Dorsolateral prefrontal cortex (tissue), 120 donors: ENCODE measurements at regions of chr6 and their contacts with region 1.

Region 1: DNA sequence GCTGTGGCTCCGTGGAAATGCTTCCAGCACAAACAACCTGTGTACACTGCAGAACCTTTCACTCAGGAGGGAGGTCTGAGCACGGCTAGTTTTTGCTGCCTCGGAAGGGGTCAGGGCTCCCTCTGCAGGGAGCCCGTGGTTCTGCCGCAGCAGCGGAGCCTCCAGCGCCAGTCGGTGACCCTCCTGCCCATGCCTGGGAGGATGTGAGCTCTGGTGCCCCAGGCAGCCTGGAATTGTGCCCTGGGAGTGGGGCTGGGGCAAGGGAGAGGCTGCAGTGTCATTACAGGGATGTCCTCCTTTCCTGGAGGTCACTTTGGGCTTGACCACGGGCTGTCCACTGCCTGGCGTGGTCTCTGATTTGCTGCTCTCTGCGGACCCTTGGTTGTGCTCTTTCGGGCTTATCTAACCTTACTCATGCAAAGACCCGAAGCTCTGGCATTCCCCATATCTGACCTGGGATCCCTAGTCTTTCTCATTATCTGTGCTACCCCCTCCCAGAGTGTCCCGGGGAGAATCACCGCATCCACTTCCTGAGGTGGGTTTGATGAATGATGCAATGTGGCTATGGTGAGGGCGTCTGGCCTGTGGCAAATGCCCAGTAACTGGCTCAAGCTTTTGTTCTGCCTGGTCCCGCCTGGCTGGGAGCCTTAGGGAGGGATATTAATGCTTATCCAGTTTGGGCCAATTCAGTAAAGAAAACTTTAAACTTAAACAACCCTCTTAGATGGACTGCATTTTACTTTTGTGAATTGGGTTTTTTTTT is 59.6 kb upstream of the TAGAP start:
- DNase-seq: peak in 6 of 10 donors; percentile 47 to 76 (median 60)
- H3K4me3 ChIP-seq: no peak overlapping the region
- H3K27ac ChIP-seq: peak overlapping the region in 30 of 59 donors; percentile 1 to 88 (median 72)
- H3K27me3 ChIP-seq: no peaks in the 10 kb centered on the region
- CTCF ChIP-seq: peak; percentile 27 to 91 (median 82)

Region 2: DNA sequence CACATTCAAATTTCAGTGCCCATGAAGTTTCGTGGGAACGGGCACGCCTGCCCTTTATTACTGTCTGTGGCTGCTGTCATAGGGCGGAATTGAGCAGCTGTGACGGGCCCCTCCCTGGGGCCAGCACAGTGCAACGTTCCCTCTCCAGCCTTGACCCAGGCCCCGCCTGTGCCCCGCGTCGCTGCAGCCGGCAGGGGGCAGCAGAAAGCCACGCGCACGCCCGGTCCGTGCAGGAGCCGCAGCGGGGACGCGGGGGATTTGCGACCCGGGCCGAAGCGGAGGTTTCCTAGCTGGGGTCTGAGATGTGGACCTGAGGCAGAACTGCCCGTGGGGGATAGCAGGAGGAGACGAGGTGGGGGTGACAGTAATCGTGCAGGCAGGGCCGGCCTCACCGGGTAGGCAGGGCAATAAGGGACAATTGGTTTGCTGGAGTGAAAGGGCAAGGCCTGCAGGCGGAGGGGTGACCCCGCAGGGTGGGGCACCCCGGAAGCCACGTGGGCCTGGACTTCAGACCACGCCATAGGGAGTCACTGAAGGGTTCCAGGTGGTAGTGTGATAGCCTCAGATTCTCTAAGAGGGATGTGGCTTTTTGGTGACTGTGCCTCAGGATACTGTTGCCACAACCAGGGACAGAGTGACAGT is 400.0 kb before region 1 on chr6:
- intact Hi-C with region 1: loop called in 1 of 2 experiments (anchors 10 kb)
- DNase-seq: peak; percentile 47 to 85 (median 62)
- H3K4me3 ChIP-seq: peak overlapping the region; percentile 7 to 73 (median 53)
- H3K27ac ChIP-seq: peak overlapping the region in 5 of 59 donors; percentile 43 to 72 (median 69)
- H3K27me3 ChIP-seq: no peaks in the 10 kb centered on the region
- CTCF ChIP-seq: peak; percentile 88 to 100 (median 98)

Region 3: DNA sequence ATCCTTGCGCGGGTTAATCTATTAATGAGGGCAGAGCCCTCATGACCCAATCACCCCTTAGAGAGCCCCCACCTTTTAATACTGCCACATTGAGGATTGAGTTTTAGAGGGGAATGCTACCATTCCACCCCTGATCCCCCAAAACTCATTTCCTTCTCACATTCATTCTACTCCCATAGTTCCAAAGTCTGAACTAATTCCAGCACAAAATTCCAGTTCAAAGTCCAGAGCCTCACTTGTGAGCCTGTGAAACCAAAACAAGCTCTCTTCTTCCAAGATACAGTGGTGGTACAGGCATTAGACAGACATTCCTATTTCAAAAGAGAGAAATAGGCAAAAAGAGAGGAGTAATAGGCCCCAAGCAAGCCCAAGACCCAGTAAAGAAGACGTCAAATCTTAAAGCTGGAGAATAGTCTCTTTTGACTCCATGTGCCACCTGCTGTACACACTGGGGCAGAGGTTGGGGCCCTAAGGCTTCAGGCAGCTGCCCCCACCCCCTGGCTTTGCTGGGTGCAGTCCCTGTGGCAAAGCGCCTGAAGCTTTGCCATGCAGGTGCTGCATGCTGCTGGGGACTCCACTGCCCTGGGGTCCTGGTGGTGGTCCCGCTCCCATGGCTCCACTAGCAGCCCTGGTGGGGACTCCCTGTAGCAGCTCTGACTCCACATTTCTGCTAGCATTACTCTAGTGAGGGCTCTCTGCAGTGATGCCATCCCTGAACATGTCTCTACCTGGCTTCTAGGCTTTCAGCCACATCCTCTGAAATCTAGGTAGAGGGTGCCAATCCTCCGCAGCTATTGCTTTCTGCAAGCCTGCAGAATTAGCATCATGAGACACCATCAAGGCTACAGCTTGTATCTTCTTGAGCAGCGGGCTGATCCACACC is 145.6 kb before region 1 on chr6:
- intact Hi-C with region 1: no loop called
- DNase-seq: no peak
- H3K4me3 ChIP-seq: no peak overlapping the region
- H3K27ac ChIP-seq: peak overlapping the region in 19 of 59 donors; percentile 0 to 74 (median 37)
- H3K27me3 ChIP-seq: no peaks in the 10 kb centered on the region
- CTCF ChIP-seq: no peak

Region 4: DNA sequence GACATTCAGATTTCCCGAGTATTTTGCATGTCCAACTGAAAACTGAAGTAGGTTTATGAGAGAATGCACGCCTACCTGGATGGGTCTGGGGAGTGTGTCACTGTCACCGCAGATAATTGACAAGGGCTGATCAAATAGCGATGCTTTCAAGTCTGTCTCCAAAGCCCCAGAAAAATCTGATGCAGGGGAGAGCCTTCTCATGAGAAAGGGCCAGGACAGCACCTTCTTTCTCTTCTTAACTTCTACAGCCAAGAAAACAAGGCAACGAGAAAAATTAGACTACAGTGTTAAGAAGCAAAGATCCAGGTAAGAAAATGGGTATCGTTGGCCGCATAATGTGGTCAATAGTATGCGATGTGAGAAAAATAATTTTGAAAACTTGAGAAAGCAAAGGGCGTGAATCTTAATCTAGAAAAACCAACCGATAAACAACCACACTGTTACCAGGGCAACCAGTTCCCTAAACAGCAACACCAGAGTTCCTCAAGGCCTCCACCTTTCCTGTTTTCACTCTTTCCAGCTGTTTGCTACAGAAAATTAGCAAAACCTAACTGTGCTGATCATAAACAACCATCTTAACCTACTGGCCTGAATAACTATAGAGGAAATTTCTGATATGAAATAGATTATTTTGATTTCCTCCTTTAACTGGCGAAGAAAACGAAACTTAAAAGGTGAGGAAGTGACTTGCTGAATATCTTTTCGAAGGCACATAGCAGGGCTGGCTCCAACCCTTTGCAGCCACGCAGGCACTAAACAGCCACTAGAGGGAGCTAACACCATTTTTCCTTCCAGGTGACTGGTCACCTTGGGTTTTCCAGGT is 62.1 kb before region 1 on chr6:
- intact Hi-C with region 1: loop called (anchors 2 to 5 kb)
- DNase-seq: peak in 6 of 10 donors; percentile 35 to 74 (median 50)
- H3K4me3 ChIP-seq: peak overlapping the region in 38 of 59 donors; percentile 0 to 54 (median 28)
- H3K27ac ChIP-seq: peak overlapping the region in 13 of 59 donors; percentile 9 to 65 (median 32)
- H3K27me3 ChIP-seq: no peaks in the 10 kb centered on the region
- CTCF ChIP-seq: peak; percentile 67 to 97 (median 91)

Region 5: DNA sequence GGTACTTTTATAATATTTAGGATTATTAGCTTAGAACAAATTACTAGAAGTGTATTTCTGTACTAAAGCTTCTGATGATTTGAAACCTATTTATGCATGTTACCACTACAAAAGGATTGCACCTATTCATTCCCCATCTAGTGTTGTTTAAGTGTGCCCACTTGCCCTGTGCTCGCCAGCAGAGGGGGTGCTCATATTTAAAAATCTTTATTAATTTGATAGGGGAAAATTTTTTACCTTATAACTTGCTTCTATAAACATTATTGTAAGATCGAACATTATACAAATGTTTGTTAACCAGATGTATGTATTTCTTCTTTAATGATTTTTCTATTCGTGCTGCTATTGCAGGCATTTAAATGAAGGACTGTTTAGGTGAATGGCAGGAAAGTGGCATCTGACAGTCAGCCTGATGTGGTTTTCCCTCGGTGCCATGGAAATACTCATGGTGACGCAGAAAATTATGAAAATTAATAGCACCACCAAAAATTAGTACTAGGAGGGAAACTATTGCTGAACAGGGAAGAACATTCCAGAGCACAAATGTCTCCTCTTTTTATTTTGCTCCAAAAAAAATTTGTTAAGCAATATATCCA is 20.8 kb after region 1 on chr6:
- intact Hi-C with region 1: loop called in 1 of 2 experiments (anchors 1 kb)
- DNase-seq: no peak
- H3K4me3 ChIP-seq: no peak overlapping the region
- H3K27ac ChIP-seq: peak overlapping the region in 53 of 59 donors; percentile 16 to 96 (median 81)
- H3K27me3 ChIP-seq: no peaks in the 10 kb centered on the region
- CTCF ChIP-seq: peak in 50 of 56 donors; percentile 11 to 64 (median 44)